ENCODE measurements at regions of chr1 and their contacts with region 1.

Region 1: DNA sequence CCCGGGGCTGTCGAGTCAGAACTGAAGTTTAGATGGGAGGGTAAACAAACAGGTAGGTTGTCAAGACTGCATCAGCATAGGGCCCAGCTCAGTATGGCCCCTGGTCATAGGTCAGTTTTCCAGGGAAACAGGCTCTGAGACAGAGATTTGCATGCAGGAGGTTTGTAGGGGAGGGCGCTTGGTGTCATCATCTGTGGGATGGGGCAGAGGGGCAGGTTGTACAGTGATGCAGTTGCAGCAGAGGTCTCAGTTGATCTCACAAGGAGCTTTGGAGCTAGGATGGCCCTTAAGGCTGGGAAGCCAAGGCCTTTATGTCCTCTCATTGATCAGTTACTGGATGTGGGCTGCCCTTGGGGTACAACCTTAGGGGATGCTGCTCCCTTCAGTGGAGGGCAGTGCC is 38.5 kb upstream of the KCNA10 start:
- DNase-seq: no peak
- ATAC-seq: no peak
- H3K4me3 ChIP-seq: no peak overlapping the region
- H3K27ac ChIP-seq: no peak overlapping the region
- H3K4me1 ChIP-seq: no peaks in the 10 kb centered on the region
- H3K27me3 ChIP-seq: peaks cover 55% of the 10 kb centered on the region
- CTCF ChIP-seq: no peak

Region 2: GRCh38 chr1:110420874-110421793 is 136.3 kb before region 1 on chr1:
- CTCF ChIA-PET with region 1: no interaction called
- POLR2A ChIA-PET with region 1: no interaction called
- intact Hi-C with region 1: no loop called
- DNase-seq: peak; percentile 39
- ATAC-seq: peak; percentile 27; the same call in 1 of the 2 replicates
- H3K4me3 ChIP-seq: no peak overlapping the region
- H3K27ac ChIP-seq: no peak overlapping the region
- H3K4me1 ChIP-seq: no peaks in the 10 kb centered on the region
- H3K27me3 ChIP-seq: 0 out of 2 replicates have a peak, but pooled peaks cover 6% of the 10 kb centered on the region
- CTCF ChIP-seq: no peak

Region 3: GRCh38 chr1:110570307-110570706 is 12.8 kb after region 1 on chr1:
- CTCF ChIA-PET with region 1: interaction called, 12 read pairs
- POLR2A ChIA-PET with region 1: no interaction called
- intact Hi-C with region 1: no loop called
- DNase-seq: no peak
- ATAC-seq: no peak
- H3K4me3 ChIP-seq: no peak overlapping the region
- H3K27ac ChIP-seq: no peak overlapping the region
- H3K4me1 ChIP-seq: no peaks in the 10 kb centered on the region
- H3K27me3 ChIP-seq: peaks cover 66% of the 10 kb centered on the region
- CTCF ChIP-seq: no peak